Activated B cell treated with CpG ODN at 0.5 μM for 24 hours (primary cell): ENCODE measurements at regions of chr19 and their contacts with region 1.

Region 1: DNA sequence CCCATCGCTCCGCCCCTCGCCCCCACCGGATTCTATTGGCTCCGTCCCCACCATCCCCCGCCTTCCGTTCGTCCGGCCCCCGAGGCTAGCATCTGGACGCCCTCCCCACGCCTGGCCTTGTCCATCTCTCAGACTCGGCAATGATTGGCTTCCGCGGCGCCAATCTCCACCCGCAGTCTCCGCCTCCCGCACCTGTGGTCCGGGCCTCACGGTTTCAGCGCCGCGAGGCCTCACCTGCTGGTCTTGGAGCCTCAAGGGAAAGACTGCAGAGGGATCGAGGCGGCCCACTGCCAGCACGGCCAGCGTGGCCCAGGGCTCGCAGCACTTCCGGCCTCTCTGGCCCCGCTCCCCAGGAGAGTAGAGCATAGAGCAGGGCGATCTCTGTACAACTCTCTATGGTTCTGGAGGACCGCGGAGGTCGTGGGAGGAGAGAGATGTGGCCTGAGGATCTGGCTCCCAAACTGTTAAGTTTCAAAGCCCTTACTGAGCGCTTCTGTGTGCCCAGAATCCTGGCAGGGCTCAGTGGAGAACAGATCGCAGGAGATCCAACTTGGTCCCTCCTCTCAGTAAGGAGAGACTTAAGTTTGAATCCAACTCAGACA is at the start of gene ERCC1:
- DNase-seq: peak; percentile 79
- ATAC-seq: peak; percentile 74
- H3K4me3 Mint-ChIP-seq: peak within 1 kb of the TSS; percentile 96
- H3K27ac Mint-ChIP-seq: peak within 1 kb of the TSS; percentile 89
- H3K4me1 Mint-ChIP-seq: peaks cover 65% of the 10 kb centered on the region
- H3K27me3 Mint-ChIP-seq: no peaks in the 10 kb centered on the region
- CTCF ChIP-seq: no peak
- total RNA-seq, gene ERCC1: 69.2 and 71.6 TPM in 2 replicates

Region 2: DNA sequence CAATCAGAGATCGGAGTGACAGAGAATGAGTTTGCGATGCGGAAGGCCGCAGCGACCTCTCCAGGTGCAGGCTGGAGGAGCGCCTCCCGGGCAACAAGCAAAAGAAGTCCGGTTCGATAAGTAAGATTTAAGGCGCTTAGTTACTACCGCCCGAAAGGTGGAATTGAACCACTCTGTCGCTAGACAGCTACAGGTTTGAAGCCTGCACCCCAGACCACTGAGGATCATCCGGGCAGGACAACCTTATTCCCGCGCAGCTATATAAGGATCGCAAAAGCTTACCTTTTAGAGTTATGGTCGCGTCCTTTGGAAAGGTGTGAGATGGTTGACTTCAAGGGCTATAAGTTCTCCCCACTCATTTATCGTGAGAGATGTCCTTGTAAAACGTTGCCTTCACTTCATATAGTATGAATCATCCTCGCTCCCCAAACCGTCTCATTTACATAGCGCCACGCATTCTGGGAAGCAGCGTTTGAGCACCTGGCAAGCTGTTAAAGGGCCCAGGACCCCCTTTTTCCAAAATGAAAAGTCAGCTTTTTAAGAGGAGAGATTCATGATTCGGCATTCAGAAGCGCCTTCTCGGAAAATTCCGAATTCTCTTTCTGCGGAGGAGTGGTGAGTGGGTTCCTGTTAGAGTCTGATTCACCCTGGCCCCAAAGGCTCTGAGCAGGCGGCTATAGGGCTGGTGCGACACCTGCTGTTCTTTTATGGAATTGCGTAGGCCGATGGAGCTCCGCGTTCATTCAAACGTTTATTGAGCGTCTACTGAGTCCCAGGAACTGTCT is 55.0 kb after region 1 on chr19:
- CTCF ChIA-PET with region 1: interaction called, 17 read pairs
- POLR2A ChIA-PET with region 1: interaction called, 9 read pairs
- intact Hi-C with region 1: loop called (anchors 1 kb)
- DNase-seq: peak; percentile 79
- ATAC-seq: peak; percentile 81
- H3K4me3 Mint-ChIP-seq: peak overlapping the region; percentile 89
- H3K27ac Mint-ChIP-seq: peak overlapping the region; percentile 97
- H3K4me1 Mint-ChIP-seq: peaks cover 21% of the 10 kb centered on the region
- H3K27me3 Mint-ChIP-seq: peaks cover 14% of the 10 kb centered on the region
- CTCF ChIP-seq: peak; percentile 72

Region 3: GRCh38 chr19:45485305-45486077 is 61.8 kb after region 1 on chr19:
- CTCF ChIA-PET with region 1: interaction called, 17 read pairs
- POLR2A ChIA-PET with region 1: interaction called, 6 read pairs
- intact Hi-C with region 1: loop called (anchors 1 kb)
- DNase-seq: peak; percentile 96
- ATAC-seq: peak; percentile 99
- H3K4me3 Mint-ChIP-seq: peak overlapping the region; percentile 91
- H3K27ac Mint-ChIP-seq: peak overlapping the region; percentile 74
- H3K4me1 Mint-ChIP-seq: peaks cover 8% of the 10 kb centered on the region
- H3K27me3 Mint-ChIP-seq: peaks cover 3% of the 10 kb centered on the region
- CTCF ChIP-seq: peak; percentile 84

Region 4: GRCh38 chr19:45558399-45558878 is 134.7 kb after region 1 on chr19:
- CTCF ChIA-PET with region 1: no interaction called
- POLR2A ChIA-PET with region 1: no interaction called
- intact Hi-C with region 1: loop called (anchors 5 kb)
- DNase-seq: peak; percentile 26
- ATAC-seq: peak; percentile 99
- H3K4me3 Mint-ChIP-seq: no peak overlapping the region
- H3K27ac Mint-ChIP-seq: no peak overlapping the region
- H3K4me1 Mint-ChIP-seq: peaks cover 25% of the 10 kb centered on the region
- H3K27me3 Mint-ChIP-seq: no peaks in the 10 kb centered on the region
- CTCF ChIP-seq: no peak

Region 5: DNA sequence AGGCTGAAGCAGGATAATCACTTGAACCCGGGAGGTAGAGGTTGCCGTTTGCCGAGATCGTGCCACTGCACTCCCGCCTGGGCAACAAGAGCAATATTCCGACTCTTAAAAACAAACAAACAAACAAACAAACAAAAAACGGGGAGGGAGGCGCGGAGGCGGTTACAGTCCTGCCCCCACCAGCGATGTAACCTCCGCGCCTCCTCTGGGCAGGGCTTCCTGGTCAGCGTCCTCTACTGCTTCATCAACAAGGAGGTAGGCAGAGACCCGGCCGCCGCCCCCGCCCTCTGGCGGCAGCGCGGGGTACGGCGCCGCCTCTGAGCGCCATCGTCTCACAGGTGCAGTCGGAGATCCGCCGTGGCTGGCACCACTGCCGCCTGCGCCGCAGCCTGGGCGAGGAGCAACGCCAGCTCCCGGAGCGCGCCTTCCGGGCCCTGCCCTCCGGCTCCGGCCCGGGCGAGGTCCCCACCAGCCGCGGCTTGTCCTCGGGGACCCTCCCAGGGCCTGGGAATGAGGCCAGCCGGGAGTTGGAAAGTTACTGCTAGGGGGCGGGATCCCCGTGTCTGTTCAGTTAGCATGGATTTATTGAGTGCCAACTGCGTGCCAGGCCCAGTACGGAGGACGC is 257.8 kb after region 1 on chr19:
- CTCF ChIA-PET with region 1: no interaction called
- POLR2A ChIA-PET with region 1: no interaction called
- intact Hi-C with region 1: loop called (anchors 10 kb)
- DNase-seq: peak; percentile 92
- ATAC-seq: peak; percentile 92
- H3K4me3 Mint-ChIP-seq: peak overlapping the region; percentile 77
- H3K27ac Mint-ChIP-seq: no peak overlapping the region
- H3K4me1 Mint-ChIP-seq: peaks cover 17% of the 10 kb centered on the region
- H3K27me3 Mint-ChIP-seq: peaks cover 7% of the 10 kb centered on the region
- CTCF ChIP-seq: peak; percentile 69